Motor neuron (in vitro differentiated cells): ENCODE measurements at regions of chr1 and their contacts with region 1.

Region 1: GRCh38 chr1:118077331-118078055 is 107.5 kb downstream of the SPAG17 start:
- ATAC-seq: peak in 3 of 8 experiments; percentile 7 to 52 (median 38)
- H3K4me3 ChIP-seq: no peak overlapping the region
- H3K27ac ChIP-seq: no peak overlapping the region
- H3K4me1 ChIP-seq: peaks cover 10 to 18% of the 10 kb centered on the region in 2 donors

Region 2: GRCh38 chr1:118021668-118022067 is 55.8 kb before region 1 on chr1:
- in situ Hi-C with region 1: no loop called
- ATAC-seq: peak in 3 of 8 experiments; percentile 61 to 78 (median 65)
- H3K4me3 ChIP-seq: no peak overlapping the region
- H3K27ac ChIP-seq: no peak overlapping the region
- H3K4me1 ChIP-seq: no peaks in the 10 kb centered on the region

Region 3: GRCh38 chr1:118987468-118988185 is 910.1 kb after region 1 on chr1:
- in situ Hi-C with region 1: loop called in 1 of 9 experiments (anchors 25 kb)
- ATAC-seq: peak; percentile 36 to 86 (median 76)
- H3K4me3 ChIP-seq: peak overlapping the region; percentile 2 to 58 (median 35)
- H3K27ac ChIP-seq: peak overlapping the region in 1 of 2 donors; percentile 77
- H3K4me1 ChIP-seq: peaks cover 0 to 32% of the 10 kb centered on the region in 2 donors